Right cardiac atrium (tissue), 5 donors: ENCODE measurements at regions of chr1 and their contacts with region 1.

Region 1: DNA sequence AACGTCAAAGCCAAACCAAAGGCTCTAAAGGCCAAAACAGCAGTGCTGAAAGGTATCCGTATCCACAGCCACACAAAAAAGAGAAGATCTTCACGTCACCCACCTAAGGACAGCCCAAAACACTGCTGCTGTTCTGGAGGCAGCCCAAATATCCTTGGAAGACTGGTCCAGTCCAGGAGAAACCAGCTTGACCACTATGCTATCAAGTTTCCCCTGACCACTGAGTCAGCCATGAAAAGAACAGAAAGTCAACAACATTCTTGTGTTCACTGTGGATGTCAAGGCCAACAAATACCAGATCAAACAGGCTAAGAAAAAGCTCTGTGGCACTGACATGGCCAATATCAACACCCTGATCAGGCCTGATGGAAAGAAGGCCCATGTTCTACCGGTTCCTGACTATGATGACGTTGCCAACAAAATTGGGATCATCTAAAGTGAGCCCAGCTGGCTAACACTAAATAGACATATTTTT is 32.0 kb downstream of the ARID4B start:
- DNase-seq: no peak
- ATAC-seq: no peak
- H3K4me3 ChIP-seq: no peak overlapping the region
- H3K27ac ChIP-seq: no peak overlapping the region
- H3K4me1 ChIP-seq: peaks cover 3% of the 10 kb centered on the region
- H3K27me3 ChIP-seq: no peaks in the 10 kb centered on the region

Region 2: DNA sequence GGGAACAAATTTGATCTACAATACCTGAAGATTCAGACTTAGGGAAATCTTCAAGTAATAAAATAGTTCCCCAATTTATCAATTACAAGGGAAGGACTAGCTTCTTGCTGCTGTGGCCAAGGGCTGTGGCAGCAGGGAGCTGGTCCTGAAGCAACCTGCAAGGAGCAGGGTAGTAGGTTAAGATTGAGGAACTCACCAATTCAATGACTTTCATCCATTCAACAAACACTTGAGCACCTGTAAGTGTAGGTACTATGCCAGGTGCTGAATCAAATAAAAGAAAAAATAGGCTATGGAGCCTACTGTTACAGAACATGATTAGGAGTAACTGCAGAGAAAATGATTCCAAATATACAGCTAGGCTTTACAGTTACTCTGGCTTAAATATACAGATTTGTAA is 70.6 kb before region 1 on chr1:
- intact Hi-C with region 1: no loop called
- DNase-seq: no peak
- ATAC-seq: no peak
- H3K4me3 ChIP-seq: no peak overlapping the region
- H3K27ac ChIP-seq: no peak overlapping the region
- H3K4me1 ChIP-seq: no peaks in the 10 kb centered on the region
- H3K27me3 ChIP-seq: no peaks in the 10 kb centered on the region

Region 3: DNA sequence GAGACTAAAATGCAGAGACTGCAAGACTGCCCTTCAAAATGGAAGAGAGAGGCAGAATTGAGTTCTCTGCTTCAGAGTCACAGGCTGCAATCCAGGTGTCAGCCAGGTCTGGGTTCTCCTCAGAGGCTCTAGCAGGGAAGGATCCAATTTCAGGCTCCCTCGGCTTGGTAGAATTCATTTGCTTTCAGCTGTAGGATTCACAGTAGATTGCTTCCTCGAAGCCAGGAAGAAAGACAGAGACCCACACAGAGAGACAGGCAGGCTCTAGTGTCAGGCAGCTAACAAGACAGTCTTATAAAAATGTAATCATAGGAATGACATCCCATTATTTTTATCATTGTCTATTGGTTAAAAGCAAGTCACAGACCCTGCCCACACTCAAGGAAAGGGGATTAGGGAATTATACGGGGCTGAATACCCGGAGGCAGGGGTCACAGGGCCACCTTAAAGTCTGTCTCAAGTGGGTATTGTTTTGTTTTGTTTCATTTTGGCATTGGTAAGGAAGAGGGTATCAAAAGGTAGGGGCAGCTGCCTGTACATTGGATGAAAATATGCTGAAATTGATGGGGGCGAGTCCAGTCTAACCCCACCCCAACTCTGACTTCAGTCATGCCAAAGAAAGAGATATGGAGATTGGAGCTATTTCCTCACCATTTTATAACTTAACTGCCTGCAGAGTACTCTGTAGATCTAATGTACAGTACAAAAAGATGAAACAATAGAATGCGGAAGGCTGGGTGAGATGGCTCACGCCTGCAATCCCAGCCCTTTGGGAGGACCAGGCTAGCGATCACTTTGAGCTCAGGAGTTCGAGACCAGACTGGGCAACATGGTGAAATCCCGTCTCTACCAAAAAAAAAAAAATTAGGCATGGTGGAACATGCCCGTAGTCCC is 61.8 kb after region 1 on chr1:
- intact Hi-C with region 1: loop called in 1 of 4 experiments (anchors 10 kb)
- DNase-seq: no peak
- ATAC-seq: no peak
- H3K4me3 ChIP-seq: no peak overlapping the region
- H3K27ac ChIP-seq: no peak overlapping the region
- H3K4me1 ChIP-seq: no peaks in the 10 kb centered on the region
- H3K27me3 ChIP-seq: no peaks in the 10 kb centered on the region

Region 4: GRCh38 chr1:235545277-235545930 is 249.5 kb after region 1 on chr1:
- intact Hi-C with region 1: no loop called
- DNase-seq: no peak
- ATAC-seq: no peak
- H3K4me3 ChIP-seq: no peak overlapping the region
- H3K27ac ChIP-seq: no peak overlapping the region
- H3K4me1 ChIP-seq: no peaks in the 10 kb centered on the region
- H3K27me3 ChIP-seq: no peaks in the 10 kb centered on the region

Region 5: GRCh38 chr1:235734335-235734734 is 438.4 kb after region 1 on chr1:
- intact Hi-C with region 1: no loop called
- DNase-seq: no peak
- ATAC-seq: no peak
- H3K4me3 ChIP-seq: no peak overlapping the region
- H3K27ac ChIP-seq: no peak overlapping the region
- H3K4me1 ChIP-seq: no peaks in the 10 kb centered on the region
- H3K27me3 ChIP-seq: no peaks in the 10 kb centered on the region